OCI-LY7 (cell line): ENCODE measurements at regions of chr4 and their contacts with region 1.

Region 1: DNA sequence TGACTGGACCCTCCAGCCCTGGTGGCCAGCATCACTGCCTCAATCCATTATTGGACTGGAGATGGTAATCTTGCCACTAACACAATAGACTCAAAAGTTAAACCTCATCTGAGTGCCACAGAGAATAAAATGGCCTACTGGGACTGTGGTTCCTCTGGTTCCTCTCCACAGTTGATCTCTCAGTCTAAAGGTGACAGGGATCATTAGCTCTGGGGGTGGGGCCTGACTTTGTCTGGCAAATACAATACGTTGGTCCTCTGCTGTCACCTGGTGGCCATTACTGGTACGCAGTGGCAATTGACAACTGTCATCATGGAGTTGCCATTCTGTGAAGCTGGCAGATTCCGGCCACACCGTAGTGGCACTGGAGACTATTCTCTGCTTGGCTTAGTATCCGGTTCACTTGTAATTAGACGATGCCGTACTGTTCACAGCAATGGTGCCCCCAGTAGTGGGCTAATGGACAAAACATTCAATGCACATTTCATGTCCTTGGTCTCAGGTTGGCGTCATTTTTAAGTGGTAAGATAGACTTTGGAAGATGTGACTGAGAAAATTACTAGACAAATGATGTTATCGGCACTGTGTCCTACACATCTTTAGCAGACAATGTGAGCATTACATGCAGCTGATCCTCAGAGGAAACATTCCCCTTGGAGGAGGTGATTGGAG is 6.7 kb downstream of the FGFBP2 start:
- DNase-seq: peak; percentile 82
- H3K4me3 ChIP-seq: no peak overlapping the region
- H3K27ac ChIP-seq: no peak overlapping the region
- H3K4me1 ChIP-seq: no peaks in the 10 kb centered on the region
- CTCF ChIP-seq: peak; percentile 94

Region 2: DNA sequence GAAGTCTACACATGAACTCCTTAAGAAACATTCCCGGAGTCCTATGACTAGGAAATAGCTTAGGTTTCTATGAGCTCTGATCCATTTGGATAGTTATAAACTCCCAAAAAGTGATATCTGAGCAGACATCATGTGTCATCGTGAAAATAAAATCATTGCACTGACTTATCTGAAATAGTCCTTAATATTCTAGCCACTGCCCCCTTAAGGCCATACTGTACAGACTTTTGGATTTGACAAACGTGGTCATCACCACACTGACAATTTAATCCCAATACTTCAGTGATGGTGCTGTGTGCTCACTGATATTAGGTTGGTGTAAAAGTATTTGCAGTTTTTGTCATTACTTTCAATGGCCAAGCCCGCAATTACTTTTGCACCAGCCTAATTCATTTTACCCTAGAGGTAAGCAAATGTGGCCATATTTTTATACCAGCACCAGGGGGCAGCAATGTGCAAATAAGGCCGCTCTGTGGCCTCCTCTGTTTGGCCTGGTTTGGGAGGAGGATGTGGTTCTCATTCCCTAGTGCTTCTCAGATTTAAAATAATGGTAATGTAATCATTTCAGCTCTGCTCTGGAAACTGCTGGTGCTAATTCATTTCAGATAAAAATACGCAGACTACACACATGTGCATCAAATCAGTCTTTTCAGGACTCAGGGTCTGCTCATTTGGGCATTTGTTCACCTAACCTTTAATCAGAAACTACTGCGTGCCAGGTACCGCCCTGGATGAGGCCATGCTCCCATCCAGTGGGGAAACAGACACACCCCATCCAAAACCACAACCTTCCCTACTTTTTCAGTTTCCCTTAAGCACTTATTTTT is 724.8 kb before region 1 on chr4:
- CTCF ChIA-PET with region 1: no interaction called
- POLR2A ChIA-PET with region 1: no interaction called
- intact Hi-C with region 1: loop called (anchors 10 kb)
- DNase-seq: peak; percentile 79
- H3K4me3 ChIP-seq: no peak overlapping the region
- H3K27ac ChIP-seq: no peak overlapping the region
- H3K4me1 ChIP-seq: no peaks in the 10 kb centered on the region
- CTCF ChIP-seq: peak; percentile 86

Region 3: GRCh38 chr4:15479089-15479912 is 477.0 kb before region 1 on chr4:
- CTCF ChIA-PET with region 1: interaction called, 3 read pairs
- POLR2A ChIA-PET with region 1: no interaction called
- intact Hi-C with region 1: loop called (anchors 1 kb)
- DNase-seq: peak; percentile 44
- H3K4me3 ChIP-seq: no peak overlapping the region
- H3K27ac ChIP-seq: no peak overlapping the region
- H3K4me1 ChIP-seq: no peaks in the 10 kb centered on the region
- CTCF ChIP-seq: peak; percentile 80

Region 4: DNA sequence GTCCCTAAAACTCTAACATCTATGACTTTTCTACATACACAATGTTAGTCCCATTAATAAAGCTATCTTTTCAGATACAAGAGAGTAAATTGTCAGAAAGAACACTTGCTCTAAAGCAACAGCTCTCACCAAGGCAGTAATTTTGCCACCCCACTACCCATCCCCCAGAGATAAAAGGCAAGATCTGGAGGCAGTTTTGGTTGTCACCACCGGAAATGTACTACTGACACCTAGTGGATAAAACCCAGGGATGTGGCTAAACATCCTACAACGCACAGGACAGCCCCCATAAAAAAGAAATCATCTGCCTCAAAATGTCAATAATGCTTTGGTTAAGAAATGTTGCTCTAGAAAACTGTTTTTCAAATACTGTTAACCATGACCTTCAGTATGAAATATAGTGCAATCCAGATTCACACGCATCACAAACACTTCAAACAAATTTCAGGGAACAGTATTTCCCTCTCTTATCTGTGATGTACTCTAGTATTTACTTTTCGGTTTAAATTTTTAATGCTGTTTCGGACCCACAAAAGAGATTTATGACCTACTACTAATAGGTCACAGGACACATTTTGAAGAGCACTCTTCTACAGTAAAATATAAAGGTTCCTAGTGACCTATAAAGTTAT is 306.3 kb before region 1 on chr4:
- CTCF ChIA-PET with region 1: no interaction called
- POLR2A ChIA-PET with region 1: no interaction called
- intact Hi-C with region 1: loop called (anchors 2 kb)
- DNase-seq: peak; percentile 79
- H3K4me3 ChIP-seq: no peak overlapping the region
- H3K27ac ChIP-seq: no peak overlapping the region
- H3K4me1 ChIP-seq: peaks cover 43% of the 10 kb centered on the region
- CTCF ChIP-seq: peak; percentile 98

Region 5: DNA sequence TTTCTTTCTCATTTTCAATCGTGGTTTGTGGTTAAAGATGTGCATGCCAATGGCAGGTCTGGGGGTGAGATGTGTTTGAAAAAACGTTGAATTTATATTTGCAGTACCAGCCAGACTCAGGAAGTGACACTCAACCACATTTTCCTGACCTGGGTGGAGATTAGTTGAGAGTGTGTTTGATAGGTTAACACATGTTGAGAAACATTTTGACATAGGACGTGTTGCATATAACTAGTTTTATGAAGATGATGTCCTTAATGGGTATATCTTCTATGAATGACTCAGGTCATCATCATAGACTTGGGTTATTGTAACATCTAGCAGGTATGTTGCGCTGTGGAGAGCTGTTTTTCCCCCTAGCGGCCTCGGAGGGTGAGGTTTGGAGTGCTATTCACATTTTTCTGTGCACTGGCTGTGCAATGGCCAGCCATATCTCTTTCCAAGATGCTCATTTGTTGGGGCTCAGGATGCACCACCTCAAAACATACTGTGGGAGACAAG is 199.9 kb before region 1 on chr4:
- CTCF ChIA-PET with region 1: no interaction called
- POLR2A ChIA-PET with region 1: no interaction called
- intact Hi-C with region 1: no loop called
- DNase-seq: peak; percentile 67
- H3K4me3 ChIP-seq: peak overlapping the region; percentile 51
- H3K27ac ChIP-seq: peak overlapping the region; percentile 57
- H3K4me1 ChIP-seq: peaks cover 39% of the 10 kb centered on the region
- CTCF ChIP-seq: peak; percentile 70

Region 6: GRCh38 chr4:15805583-15806517 is 150.5 kb before region 1 on chr4:
- CTCF ChIA-PET with region 1: interaction called, 8 read pairs
- POLR2A ChIA-PET with region 1: interaction called, 3 read pairs
- intact Hi-C with region 1: loop called (anchors 1 kb)
- DNase-seq: peak; percentile 81
- H3K4me3 ChIP-seq: no peak overlapping the region
- H3K27ac ChIP-seq: peak overlapping the region; percentile 60
- H3K4me1 ChIP-seq: peaks cover 90% of the 10 kb centered on the region
- CTCF ChIP-seq: peak; percentile 94

Region 7: GRCh38 chr4:15882675-15883086 is 73.6 kb before region 1 on chr4:
- CTCF ChIA-PET with region 1: interaction called, 4 read pairs
- POLR2A ChIA-PET with region 1: no interaction called
- intact Hi-C with region 1: loop called (anchors 1 kb)
- DNase-seq: peak; percentile 87
- H3K4me3 ChIP-seq: no peak overlapping the region
- H3K27ac ChIP-seq: no peak overlapping the region
- H3K4me1 ChIP-seq: peaks cover 3% of the 10 kb centered on the region
- CTCF ChIP-seq: peak; percentile 94

Region 8: DNA sequence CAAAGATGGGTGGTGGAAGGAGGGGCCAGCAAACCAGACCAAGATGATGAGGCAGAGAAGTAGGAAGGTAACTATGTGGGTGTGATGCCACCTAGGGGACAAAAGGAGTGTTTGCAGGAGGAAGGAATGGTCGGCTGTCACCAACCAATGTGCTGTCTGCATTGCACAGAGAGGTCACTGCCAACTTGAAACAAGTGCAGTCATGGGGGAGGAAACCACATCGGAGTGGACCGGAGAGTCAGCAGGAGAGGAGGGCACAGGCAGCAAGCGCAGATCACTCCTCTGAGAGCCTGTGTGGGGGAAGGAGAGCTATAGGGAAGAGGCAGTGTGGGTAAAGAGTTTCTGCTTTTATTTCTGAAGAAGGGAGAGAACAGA is 45.2 kb after region 1 on chr4:
- CTCF ChIA-PET with region 1: no interaction called
- POLR2A ChIA-PET with region 1: no interaction called
- intact Hi-C with region 1: loop called (anchors 2 kb)
- DNase-seq: peak; percentile 75
- H3K4me3 ChIP-seq: no peak overlapping the region
- H3K27ac ChIP-seq: no peak overlapping the region
- H3K4me1 ChIP-seq: no peaks in the 10 kb centered on the region
- CTCF ChIP-seq: peak; percentile 92